Panc1 (cell line): ENCODE measurements at regions of chr16 and their contacts with region 1.

Region 1: DNA sequence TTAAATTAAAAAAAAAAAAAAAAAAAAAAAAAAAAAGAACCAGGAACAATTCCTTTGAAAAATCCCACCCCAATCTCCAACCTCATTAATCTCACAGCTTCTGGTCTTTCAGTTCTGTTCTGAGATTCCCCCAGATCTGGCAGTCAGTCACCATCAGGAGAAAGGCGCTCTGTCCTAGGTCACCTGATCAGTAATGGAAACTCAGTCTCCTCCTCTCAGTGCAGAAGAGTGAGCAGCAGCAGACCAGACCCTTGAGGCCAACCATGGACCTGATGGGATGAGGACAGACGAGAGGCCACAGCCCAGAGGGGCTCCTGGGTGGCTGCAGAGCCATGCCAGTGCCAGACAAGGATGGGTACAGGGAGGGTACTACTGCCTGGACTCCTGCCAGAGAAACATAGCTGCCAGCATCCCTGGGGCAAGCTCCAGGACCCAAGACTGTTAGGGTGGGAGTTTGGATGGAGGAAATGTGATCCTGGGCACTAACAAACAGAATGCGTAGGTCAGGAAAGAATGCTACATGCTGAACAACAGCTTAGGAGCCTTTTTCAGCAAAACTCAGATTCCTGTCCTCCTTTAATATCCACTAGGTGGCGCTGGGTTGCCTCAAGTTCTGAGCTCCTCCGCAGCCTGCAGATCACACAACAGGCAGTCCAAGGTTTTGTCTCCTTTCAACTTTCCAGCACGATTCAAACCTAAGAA is 28.7 kb downstream of the MPG start:
- DNase-seq: peak; percentile 47
- ATAC-seq: peak; percentile 89
- H3K4me3 ChIP-seq: no peak overlapping the region
- H3K27ac ChIP-seq: no peak overlapping the region
- H3K4me1 ChIP-seq: no peaks in the 10 kb centered on the region
- H3K27me3 ChIP-seq: no peaks in the 10 kb centered on the region
- CTCF ChIP-seq: peak; percentile 90

Region 2: GRCh38 chr16:180938-181667 is 74.3 kb after region 1 on chr16:
- CTCF ChIA-PET with region 1: interaction called, 3 read pairs
- POLR2A ChIA-PET with region 1: no interaction called
- in situ Hi-C with region 1: no loop called
- intact Hi-C with region 1: loop called (anchors 2 kb)
- DNase-seq: no peak
- ATAC-seq: peak; percentile 84
- H3K4me3 ChIP-seq: peak overlapping the region; percentile 43 to 51
- H3K27ac ChIP-seq: peak overlapping the region; percentile 69
- H3K4me1 ChIP-seq: peaks cover 6% of the 10 kb centered on the region; the same call in 1 of the 2 replicates
- H3K27me3 ChIP-seq: no peaks in the 10 kb centered on the region
- CTCF ChIP-seq: peak; percentile 97

Region 3: DNA sequence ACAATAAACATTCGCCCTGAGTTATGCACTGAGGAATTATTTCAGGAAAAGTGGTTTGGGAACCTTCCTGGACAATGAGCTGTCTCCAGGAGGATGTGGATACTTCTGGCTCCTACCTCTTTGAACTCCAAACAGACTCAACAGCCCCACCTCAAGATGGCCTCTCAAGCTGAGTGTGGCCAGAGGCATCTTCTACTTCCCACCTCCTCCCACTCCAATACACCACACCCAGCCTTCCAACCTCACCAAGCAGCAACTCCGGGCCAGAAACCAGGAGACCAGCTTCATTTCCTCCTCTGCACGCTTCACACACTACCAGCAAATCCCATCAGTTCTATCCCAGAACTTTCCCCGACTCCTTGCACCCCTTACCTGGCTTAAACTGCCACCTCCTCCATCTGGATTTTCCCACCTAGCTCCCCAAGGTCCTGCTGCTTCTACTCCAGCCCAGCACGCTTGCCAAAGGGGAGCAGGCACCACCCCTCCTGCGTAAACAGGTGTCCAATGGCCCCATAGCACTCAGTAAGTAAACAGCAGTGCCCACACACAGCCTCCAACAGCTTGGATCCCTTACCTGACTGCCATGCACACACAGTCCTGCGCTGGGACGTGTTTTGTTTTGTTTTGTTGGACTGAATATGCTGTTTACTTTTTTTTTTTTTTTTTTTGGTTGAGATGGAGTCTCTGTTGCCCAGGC is 85.2 kb after region 1 on chr16:
- CTCF ChIA-PET with region 1: interaction called, 10 read pairs
- POLR2A ChIA-PET with region 1: no interaction called
- in situ Hi-C with region 1: no loop called
- intact Hi-C with region 1: no loop called
- DNase-seq: no peak
- ATAC-seq: no peak
- H3K4me3 ChIP-seq: no peak overlapping the region
- H3K27ac ChIP-seq: no peak overlapping the region
- H3K4me1 ChIP-seq: no peaks in the 10 kb centered on the region
- H3K27me3 ChIP-seq: no peaks in the 10 kb centered on the region
- CTCF ChIP-seq: no peak